ENCODE measurements at regions of chr18 and their contacts with region 1.

Region 1: GRCh38 chr18:51668101-51668500 is 470.6 kb upstream of the MEX3C start:
- DNase-seq: peak; percentile 22 to 40
- H3K4me3 ChIP-seq: no peak overlapping the region
- H3K27ac ChIP-seq: no peak overlapping the region
- H3K4me1 ChIP-seq: no peaks in the 10 kb centered on the region
- H3K27me3 ChIP-seq: no peaks in the 10 kb centered on the region
- CTCF ChIP-seq: peak; percentile 84

Region 2: DNA sequence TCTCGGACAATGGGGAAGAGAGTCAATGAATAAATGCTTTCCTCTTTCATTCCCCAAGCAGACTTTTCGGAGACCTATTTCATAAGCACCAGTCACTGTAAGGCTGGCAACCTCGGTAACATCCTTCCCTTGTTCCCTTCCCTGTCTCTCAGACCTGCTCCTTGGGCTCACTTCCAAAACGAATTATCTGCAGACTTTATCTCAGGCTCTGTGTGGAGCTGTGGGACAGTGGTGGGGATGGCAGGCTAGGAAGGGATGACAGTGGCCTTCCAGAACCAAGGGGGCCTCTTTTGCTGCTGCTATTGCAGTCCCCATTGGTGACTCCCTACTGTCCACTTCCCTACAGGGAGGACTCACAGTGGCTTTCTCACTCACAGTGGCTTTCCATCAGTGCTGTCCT is 285.0 kb before region 1 on chr18:
- CTCF ChIA-PET with region 1: no interaction called
- POLR2A ChIA-PET with region 1: no interaction called
- intact Hi-C with region 1: no loop called
- DNase-seq: no peak
- H3K4me3 ChIP-seq: no peak overlapping the region
- H3K27ac ChIP-seq: no peak overlapping the region
- H3K4me1 ChIP-seq: no peaks in the 10 kb centered on the region
- H3K27me3 ChIP-seq: no peaks in the 10 kb centered on the region
- CTCF ChIP-seq: no peak

Region 3: DNA sequence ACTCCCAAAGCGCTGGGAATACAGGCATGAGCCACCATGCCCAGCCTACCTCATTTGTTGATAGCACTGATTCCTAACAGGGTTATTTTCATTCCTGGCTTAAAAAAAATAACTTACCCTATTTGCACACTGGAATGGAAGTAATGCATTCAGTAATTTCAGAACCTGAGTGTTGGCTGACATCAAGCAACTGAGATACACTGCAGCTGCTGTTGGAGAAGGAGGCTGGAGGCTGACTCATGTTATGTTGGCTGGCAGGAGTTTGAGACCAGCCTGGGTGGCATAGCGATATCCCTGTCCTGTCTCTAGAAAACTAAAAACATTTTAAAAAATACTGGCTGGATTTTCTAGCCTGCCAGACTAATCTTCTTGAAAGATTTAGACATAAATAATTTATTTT is 85.5 kb before region 1 on chr18:
- CTCF ChIA-PET with region 1: no interaction called
- POLR2A ChIA-PET with region 1: no interaction called
- intact Hi-C with region 1: no loop called
- DNase-seq: no peak
- H3K4me3 ChIP-seq: no peak overlapping the region
- H3K27ac ChIP-seq: no peak overlapping the region
- H3K4me1 ChIP-seq: no peaks in the 10 kb centered on the region
- H3K27me3 ChIP-seq: no peaks in the 10 kb centered on the region
- CTCF ChIP-seq: no peak

Region 4: DNA sequence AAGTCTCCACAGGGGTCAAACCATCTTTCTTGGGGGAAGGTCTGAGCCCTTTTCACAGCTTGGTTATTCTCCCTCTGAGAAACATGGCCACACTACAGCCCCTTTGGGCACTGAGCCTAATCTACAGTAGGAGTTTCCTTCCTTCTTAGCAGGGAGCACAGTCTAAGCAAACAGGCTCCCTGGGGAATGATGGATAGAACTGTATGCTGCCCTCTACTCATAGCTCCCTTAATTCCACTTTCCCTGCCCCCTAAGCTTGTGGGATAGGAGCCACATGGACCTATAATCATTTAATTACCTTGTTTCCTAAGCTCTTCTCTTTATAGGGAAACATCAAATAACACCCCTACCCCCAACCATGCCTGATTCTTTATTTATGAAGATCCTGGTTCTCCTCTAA is 28.6 kb before region 1 on chr18:
- CTCF ChIA-PET with region 1: interaction called, 10 read pairs
- POLR2A ChIA-PET with region 1: no interaction called
- intact Hi-C with region 1: no loop called
- DNase-seq: no peak
- H3K4me3 ChIP-seq: no peak overlapping the region
- H3K27ac ChIP-seq: no peak overlapping the region
- H3K4me1 ChIP-seq: no peaks in the 10 kb centered on the region
- H3K27me3 ChIP-seq: no peaks in the 10 kb centered on the region
- CTCF ChIP-seq: no peak

Region 5: GRCh38 chr18:52288403-52289004 is 620.4 kb after region 1 on chr18:
- CTCF ChIA-PET with region 1: no interaction called
- POLR2A ChIA-PET with region 1: no interaction called
- intact Hi-C with region 1: loop called (anchors 2 kb)
- DNase-seq: peak in 1 of 2 experiments; percentile 31
- H3K4me3 ChIP-seq: no peak overlapping the region
- H3K27ac ChIP-seq: no peak overlapping the region
- H3K4me1 ChIP-seq: no peaks in the 10 kb centered on the region
- H3K27me3 ChIP-seq: no peaks in the 10 kb centered on the region
- CTCF ChIP-seq: peak; percentile 94

Region 6: DNA sequence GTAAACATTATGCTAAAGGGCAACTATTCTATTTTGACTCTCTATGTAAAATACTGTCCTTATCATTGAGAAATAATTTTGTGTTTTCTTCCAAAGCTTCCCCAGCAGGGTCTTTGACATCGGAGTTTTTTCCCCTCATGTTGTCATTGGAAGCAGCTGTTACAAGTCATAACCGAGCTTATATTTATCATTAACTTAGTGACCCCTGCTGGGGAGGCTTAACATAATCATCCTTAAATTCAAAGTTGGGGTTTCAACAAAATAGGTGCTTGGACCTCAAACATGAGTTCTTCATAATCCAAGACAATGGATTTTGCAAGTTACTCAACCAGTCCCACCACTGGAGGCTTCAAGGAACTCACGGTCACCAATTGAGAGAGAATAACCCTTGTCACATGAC is 1002.8 kb after region 1 on chr18:
- CTCF ChIA-PET with region 1: no interaction called
- POLR2A ChIA-PET with region 1: no interaction called
- intact Hi-C with region 1: loop called (anchors 2 kb)
- DNase-seq: no peak
- H3K4me3 ChIP-seq: no peak overlapping the region
- H3K27ac ChIP-seq: no peak overlapping the region
- H3K4me1 ChIP-seq: no peaks in the 10 kb centered on the region
- H3K27me3 ChIP-seq: peaks cover 7% of the 10 kb centered on the region; the same call in 1 of the 2 replicates
- CTCF ChIP-seq: 0 out of 2 replicates have a peak, but pooled peaks have one; percentile 29